ENCODE measurements at regions of chr16 and their contacts with region 1.

Region 1: GRCh38 chr16:53773150-53773846 is 69.3 kb downstream of the FTO start:
- DNase-seq: peak; percentile 71 to 77
- H3K4me3 ChIP-seq: no peak overlapping the region
- H3K4me3 Mint-ChIP-seq: no peak overlapping the region
- H3K27ac Mint-ChIP-seq: no peak overlapping the region
- H3K4me1 ChIP-seq: peaks cover 74% of the 10 kb centered on the region
- H3K4me1 Mint-ChIP-seq: peaks cover 26% of the 10 kb centered on the region
- H3K27me3 ChIP-seq: no peaks in the 10 kb centered on the region
- H3K27me3 Mint-ChIP-seq: no peaks in the 10 kb centered on the region
- CTCF ChIP-seq: peak; percentile 76 to 87

Region 2: DNA sequence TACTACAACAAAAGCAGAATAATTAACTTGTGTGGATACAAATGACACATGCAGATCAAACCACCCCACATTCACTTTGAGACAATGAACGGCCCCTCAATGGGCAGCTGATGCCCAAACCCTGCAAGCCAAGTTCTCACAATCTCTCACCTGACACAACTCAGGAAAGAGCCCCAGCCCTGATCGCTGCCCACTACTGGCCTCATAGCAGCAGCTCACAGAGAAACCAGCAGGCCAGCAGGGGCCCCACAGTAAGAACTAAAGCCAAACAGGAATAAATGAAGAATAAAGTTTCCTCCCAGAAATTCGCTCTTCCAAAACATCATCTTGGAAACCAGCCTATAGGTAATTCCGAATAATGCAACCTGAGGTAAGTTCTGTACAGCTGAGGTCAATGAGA is 278.0 kb before region 1 on chr16:
- CTCF ChIA-PET with region 1: no interaction called
- POLR2A ChIA-PET with region 1: no interaction called
- intact Hi-C with region 1: no loop called
- DNase-seq: no peak
- H3K4me3 ChIP-seq: no peak overlapping the region
- H3K4me3 Mint-ChIP-seq: no peak overlapping the region
- H3K27ac Mint-ChIP-seq: no peak overlapping the region
- H3K4me1 ChIP-seq: peaks cover under 1% of the 10 kb centered on the region; the same call in 1 of the 2 replicates
- H3K4me1 Mint-ChIP-seq: peaks cover 7% of the 10 kb centered on the region
- H3K27me3 ChIP-seq: no peaks in the 10 kb centered on the region
- H3K27me3 Mint-ChIP-seq: no peaks in the 10 kb centered on the region
- CTCF ChIP-seq: peak in 1 of 2 experiments; percentile 46

Region 3: DNA sequence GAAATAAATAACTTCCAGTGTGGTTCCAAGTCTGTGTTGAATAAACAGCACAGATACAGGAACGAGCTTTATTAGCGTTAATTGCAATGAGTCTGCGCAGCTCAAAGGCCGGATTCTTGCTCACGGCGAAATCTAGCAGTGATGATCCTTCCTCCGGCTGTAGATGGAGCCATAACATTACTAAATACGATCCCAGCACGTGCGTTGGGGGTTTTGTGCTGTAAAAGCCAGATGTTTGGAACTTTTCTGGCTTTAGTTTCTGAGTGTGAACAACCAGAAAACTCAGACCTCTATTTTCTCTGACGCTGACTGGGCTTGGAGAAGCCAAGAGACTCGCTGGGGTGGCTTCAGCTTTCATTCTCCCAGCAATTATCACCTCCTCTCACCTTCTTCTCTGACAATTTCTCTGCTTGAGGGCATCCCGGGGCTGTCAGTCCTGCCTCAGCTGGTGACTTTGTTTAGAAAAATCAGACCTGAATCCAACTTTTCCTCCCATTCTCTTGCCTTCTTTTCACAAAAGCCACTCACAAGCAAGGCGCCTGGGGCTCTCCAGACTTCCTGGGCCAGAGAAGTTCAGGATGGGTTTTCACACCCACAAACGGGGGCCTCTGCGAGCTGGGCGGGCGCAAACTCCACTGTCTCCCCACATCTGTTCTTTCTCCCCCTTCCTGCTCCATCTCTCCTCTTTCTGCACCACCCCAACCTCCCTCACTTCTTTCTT is 223.2 kb before region 1 on chr16:
- CTCF ChIA-PET with region 1: interaction called, 12 read pairs
- POLR2A ChIA-PET with region 1: no interaction called
- intact Hi-C with region 1: loop called (anchors 1 kb)
- DNase-seq: peak; percentile 75 to 82
- H3K4me3 ChIP-seq: no peak overlapping the region
- H3K4me3 Mint-ChIP-seq: no peak overlapping the region
- H3K27ac Mint-ChIP-seq: peak overlapping the region; percentile 73
- H3K4me1 ChIP-seq: peaks cover 13% of the 10 kb centered on the region
- H3K4me1 Mint-ChIP-seq: peaks cover 12% of the 10 kb centered on the region
- H3K27me3 ChIP-seq: no peaks in the 10 kb centered on the region
- H3K27me3 Mint-ChIP-seq: no peaks in the 10 kb centered on the region
- CTCF ChIP-seq: peak; percentile 76

Region 4: GRCh38 chr16:53672461-53672860 is 100.8 kb before region 1 on chr16:
- CTCF ChIA-PET with region 1: no interaction called
- POLR2A ChIA-PET with region 1: no interaction called
- intact Hi-C with region 1: no loop called
- DNase-seq: no peak
- H3K4me3 ChIP-seq: no peak overlapping the region
- H3K4me3 Mint-ChIP-seq: no peak overlapping the region
- H3K27ac Mint-ChIP-seq: no peak overlapping the region
- H3K4me1 ChIP-seq: no peaks in the 10 kb centered on the region; the same call in 1 of the 2 replicates
- H3K4me1 Mint-ChIP-seq: no peaks in the 10 kb centered on the region
- H3K27me3 ChIP-seq: no peaks in the 10 kb centered on the region
- H3K27me3 Mint-ChIP-seq: no peaks in the 10 kb centered on the region
- CTCF ChIP-seq: no peak

Region 5: GRCh38 chr16:53730693-53731092 is 42.6 kb before region 1 on chr16:
- CTCF ChIA-PET with region 1: no interaction called
- POLR2A ChIA-PET with region 1: no interaction called
- intact Hi-C with region 1: no loop called
- DNase-seq: no peak
- H3K4me3 ChIP-seq: no peak overlapping the region
- H3K4me3 Mint-ChIP-seq: no peak overlapping the region
- H3K27ac Mint-ChIP-seq: no peak overlapping the region
- H3K4me1 ChIP-seq: peaks cover 58% of the 10 kb centered on the region
- H3K4me1 Mint-ChIP-seq: peaks cover 48% of the 10 kb centered on the region
- H3K27me3 ChIP-seq: no peaks in the 10 kb centered on the region
- H3K27me3 Mint-ChIP-seq: no peaks in the 10 kb centered on the region
- CTCF ChIP-seq: no peak

Region 6: GRCh38 chr16:53792161-53792951 is 19.1 kb after region 1 on chr16:
- CTCF ChIA-PET with region 1: interaction called, 9 read pairs
- POLR2A ChIA-PET with region 1: no interaction called
- intact Hi-C with region 1: loop called (anchors 1 kb)
- DNase-seq: peak; percentile 48 to 51
- H3K4me3 ChIP-seq: no peak overlapping the region
- H3K4me3 Mint-ChIP-seq: peak overlapping the region; percentile 33
- H3K27ac Mint-ChIP-seq: peak overlapping the region; percentile 72
- H3K4me1 ChIP-seq: peaks cover 21% of the 10 kb centered on the region
- H3K4me1 Mint-ChIP-seq: peaks cover 34% of the 10 kb centered on the region
- H3K27me3 ChIP-seq: no peaks in the 10 kb centered on the region
- H3K27me3 Mint-ChIP-seq: no peaks in the 10 kb centered on the region
- CTCF ChIP-seq: no peak

Region 7: DNA sequence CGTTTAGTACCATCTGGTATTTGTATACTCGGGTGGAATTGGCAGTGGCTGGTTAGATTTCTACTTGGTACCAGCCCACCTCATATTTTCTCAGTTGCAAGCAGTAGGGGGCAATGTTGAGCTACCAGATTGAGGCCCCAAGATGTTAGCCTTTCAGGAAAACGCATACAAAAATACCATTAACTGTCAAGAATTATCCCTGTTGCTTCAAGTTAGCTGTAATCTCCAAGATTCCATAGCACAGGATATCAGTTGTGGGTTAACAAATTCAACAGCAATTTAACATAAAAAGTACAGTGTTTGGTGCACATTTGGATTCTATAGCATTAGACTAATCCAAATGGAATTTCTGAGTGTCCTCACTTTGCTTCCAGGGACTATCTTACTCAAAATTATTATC is 118.9 kb after region 1 on chr16:
- CTCF ChIA-PET with region 1: interaction called, 12 read pairs
- POLR2A ChIA-PET with region 1: interaction called, 3 read pairs
- intact Hi-C with region 1: loop called (anchors 1 kb)
- DNase-seq: peak; percentile 69 to 82
- H3K4me3 ChIP-seq: no peak overlapping the region
- H3K4me3 Mint-ChIP-seq: no peak overlapping the region
- H3K27ac Mint-ChIP-seq: no peak overlapping the region
- H3K4me1 ChIP-seq: peaks cover 45% of the 10 kb centered on the region
- H3K4me1 Mint-ChIP-seq: peaks cover 42% of the 10 kb centered on the region
- H3K27me3 ChIP-seq: no peaks in the 10 kb centered on the region
- H3K27me3 Mint-ChIP-seq: no peaks in the 10 kb centered on the region
- CTCF ChIP-seq: peak; percentile 79 to 82

Region 8: DNA sequence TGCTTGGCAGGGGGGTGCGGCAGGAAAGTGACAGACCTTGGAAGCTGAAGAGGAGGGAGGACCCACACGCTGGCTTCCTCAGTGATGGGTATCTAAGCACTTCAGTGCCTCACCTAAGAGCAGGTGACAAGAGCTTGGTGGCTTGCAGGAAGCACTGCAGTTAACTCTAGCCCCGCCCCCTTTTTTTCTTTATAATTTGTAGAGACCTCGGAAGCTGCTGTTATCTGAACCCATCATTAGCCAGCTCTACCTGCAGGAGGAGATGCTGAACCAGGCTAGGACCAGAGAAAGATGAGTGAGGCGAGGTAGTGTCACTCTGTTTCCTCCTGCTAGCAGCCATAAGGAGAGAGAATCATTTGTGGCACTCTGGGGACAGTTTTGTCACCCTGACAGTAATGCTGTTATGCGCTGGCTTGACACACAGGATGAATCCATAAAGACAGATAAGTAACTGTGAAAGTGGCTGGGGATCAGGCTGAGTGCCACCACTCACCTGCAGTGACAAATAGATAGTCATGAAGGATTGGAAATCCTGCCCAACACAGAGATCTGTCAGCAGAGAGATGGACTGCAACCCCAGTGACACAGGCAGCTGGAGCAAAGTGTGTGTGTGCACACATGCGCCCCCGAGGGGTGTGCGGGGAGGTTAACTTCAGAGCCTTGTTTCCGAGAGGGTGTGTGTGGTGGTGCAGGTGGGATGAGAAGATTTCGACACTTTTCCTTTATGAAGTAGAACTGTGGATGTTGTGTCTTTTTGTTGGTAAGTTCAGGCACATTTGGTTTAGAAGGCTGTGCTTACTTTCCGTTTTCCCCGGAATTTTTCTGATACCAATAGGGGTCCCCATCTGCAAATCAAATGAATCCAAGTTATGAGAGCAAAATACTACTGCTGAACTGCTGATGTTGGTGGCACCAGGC is 289.3 kb after region 1 on chr16:
- CTCF ChIA-PET with region 1: no interaction called
- POLR2A ChIA-PET with region 1: no interaction called
- intact Hi-C with region 1: loop called (anchors 5 kb)
- DNase-seq: peak; percentile 45 to 54
- H3K4me3 ChIP-seq: no peak overlapping the region
- H3K4me3 Mint-ChIP-seq: no peak overlapping the region
- H3K27ac Mint-ChIP-seq: peak overlapping the region; percentile 56
- H3K4me1 ChIP-seq: peaks cover 28% of the 10 kb centered on the region
- H3K4me1 Mint-ChIP-seq: peaks cover 43% of the 10 kb centered on the region
- H3K27me3 ChIP-seq: no peaks in the 10 kb centered on the region
- H3K27me3 Mint-ChIP-seq: no peaks in the 10 kb centered on the region
- CTCF ChIP-seq: no peak

Region 9: DNA sequence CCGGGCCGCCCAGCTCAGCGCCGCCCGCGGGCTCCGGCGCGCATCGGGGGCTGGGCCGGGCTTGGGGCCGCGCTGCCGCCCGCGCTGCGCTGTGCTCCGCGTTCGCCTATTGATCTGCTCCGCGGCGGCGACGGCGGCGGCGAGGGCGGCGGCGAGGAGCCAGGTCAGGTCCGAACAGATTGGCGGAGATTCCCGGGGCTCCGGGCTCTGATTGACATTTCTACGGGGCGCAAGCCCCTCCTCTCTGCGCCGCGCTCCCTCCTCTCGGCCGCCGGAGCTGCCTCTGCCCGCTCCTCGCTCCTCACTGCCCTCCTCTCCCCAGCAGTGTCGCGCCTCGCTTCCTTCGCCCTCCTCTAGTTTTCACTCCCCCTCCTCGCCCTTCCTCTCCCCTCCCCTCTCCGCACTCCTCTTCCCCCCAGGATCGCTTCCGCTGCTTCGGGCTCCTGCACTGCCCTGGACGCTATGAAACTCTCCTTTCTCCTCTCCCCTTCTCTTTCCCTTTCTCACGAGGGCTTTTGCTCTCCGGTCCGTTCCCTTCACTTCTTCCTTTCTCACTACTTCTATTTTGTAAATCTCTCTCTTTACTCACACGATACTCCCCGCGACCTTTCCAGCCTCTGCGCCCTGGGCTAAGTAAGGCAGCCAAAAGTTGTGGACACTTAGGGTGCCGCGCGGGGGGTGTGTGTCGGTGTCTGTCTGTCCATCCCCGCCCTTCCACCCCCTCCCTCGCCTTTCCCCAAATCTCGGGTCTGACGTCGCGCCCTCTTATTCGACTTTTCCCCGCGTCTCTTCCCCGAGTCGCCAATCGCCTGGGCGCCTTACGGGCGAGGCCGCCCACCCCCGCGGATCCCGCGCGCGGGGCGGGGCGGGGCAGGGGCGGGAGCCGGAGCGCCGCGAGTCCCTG is 513.0 kb after region 1 on chr16 and contains the start of gene IRX3:
- CTCF ChIA-PET with region 1: interaction called, 5 read pairs
- POLR2A ChIA-PET with region 1: no interaction called
- intact Hi-C with region 1: loop called (anchors 1 kb)
- DNase-seq: peak; percentile 90 to 95
- H3K4me3 ChIP-seq: peak within 1 kb of the TSS; percentile 83
- H3K4me3 Mint-ChIP-seq: peak within 1 kb of the TSS; percentile 85
- H3K27ac Mint-ChIP-seq: peak within 1 kb of the TSS; percentile 79
- H3K4me1 ChIP-seq: 0 out of 2 replicates have a peak, but pooled peaks cover 5% of the 10 kb centered on the region
- H3K4me1 Mint-ChIP-seq: peaks cover 7% of the 10 kb centered on the region
- H3K27me3 ChIP-seq: no peaks in the 10 kb centered on the region
- H3K27me3 Mint-ChIP-seq: no peaks in the 10 kb centered on the region
- CTCF ChIP-seq: no peak
- total RNA-seq, gene IRX3: 63.2 and 73.3 TPM in 2 replicates

Region 10: DNA sequence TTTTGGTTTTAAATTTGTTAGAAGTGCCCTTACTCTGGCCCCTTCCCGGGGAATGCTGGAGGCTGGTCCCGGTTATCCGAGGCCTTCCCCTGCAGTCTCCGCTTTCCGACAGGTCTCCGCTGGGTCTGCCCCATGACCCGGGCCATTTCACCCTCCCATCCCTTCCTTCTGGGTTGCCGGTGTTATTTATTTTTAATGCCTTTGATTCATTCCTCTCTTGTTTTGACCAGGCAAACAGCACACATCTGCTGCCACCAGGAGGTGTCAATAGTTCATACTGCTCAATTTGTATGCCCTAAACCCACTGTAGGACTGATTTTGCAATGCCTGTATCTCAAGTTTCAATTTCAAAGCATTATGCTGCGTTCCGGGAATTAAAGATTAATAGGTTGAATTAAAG is 1044.1 kb after region 1 on chr16:
- CTCF ChIA-PET with region 1: no interaction called
- POLR2A ChIA-PET with region 1: interaction called, 7 read pairs
- intact Hi-C with region 1: loop called (anchors 10 kb)
- DNase-seq: peak in 1 of 2 experiments; percentile 35
- H3K4me3 ChIP-seq: no peak overlapping the region
- H3K4me3 Mint-ChIP-seq: no peak overlapping the region
- H3K27ac Mint-ChIP-seq: peak overlapping the region; percentile 82
- H3K4me1 ChIP-seq: peaks cover 20% of the 10 kb centered on the region
- H3K4me1 Mint-ChIP-seq: peaks cover 23% of the 10 kb centered on the region
- H3K27me3 ChIP-seq: no peaks in the 10 kb centered on the region
- H3K27me3 Mint-ChIP-seq: no peaks in the 10 kb centered on the region
- CTCF ChIP-seq: peak; percentile 38 to 72